K562 (cell line): ENCODE measurements at regions of chr12 and their contacts with region 1.

Region 1: GRCh38 chr12:51891843-51892242 is 3.9 kb downstream of the ANKRD33 start:
- DNase-seq: peak in 2 of 4 experiments; percentile 51 to 63
- ATAC-seq: no peak
- H3K4me3 ChIP-seq: no peak overlapping the region
- H3K27ac ChIP-seq: no peak overlapping the region
- H3K4me1 ChIP-seq: peaks cover 2 to 33% of the 10 kb centered on the region in 2 experiments; a peak in 3 of 5 replicates
- H3K27me3 ChIP-seq: no peaks in the 10 kb centered on the region
- CTCF ChIP-seq: peak in 2 of 3 experiments; percentile 16 to 56; a peak in 3 of 6 replicates
- EP300 ChIP-seq: no peak
- POLR2A ChIP-seq: no peak
- RAD21 ChIP-seq: peak; percentile 29 to 60; a peak in 2 of 4 replicates

Region 2: DNA sequence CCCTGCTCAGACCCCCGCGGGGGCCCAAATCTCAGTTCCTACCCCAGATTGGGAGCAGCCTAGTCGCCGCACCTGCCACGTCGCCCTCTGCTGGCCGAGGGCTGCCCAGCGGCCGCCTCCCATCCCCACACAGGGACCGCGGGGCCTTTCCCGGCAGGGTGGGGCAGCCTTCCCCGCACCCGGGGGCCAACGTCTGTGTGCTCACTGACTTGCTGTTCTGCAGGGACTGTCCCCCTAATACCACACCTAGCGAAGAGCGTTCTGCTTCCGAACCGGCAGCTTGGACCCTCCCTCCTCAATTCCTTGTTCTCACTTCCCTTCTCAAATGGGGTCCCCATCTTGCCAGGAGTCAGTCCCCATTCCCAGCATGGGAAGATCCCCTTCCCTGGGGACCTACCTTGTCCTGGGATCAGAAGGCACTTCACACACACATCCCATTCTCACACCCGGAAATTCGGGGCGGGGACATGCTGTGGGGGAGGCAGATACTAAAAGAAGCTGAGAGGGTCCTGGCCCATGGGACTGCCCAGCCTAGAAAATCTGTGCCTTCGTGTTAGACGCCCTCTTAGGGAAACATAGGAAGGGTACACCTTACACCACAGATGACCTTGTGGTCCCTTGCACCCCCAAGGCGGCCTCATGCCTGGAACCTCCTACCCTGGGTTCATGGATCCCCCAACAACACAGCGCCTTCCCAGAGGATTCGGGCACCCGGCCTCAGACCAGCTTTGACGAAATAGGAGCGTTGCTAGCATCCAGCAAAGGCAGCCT is 31.8 kb after region 1 on chr12:
- CTCF ChIA-PET with region 1: interaction called, 11 read pairs
- POLR2A ChIA-PET with region 1: interaction called, 4 read pairs
- in situ Hi-C with region 1: no loop called
- intact Hi-C with region 1: loop called (anchors 1 kb)
- DNase-seq: peak; percentile 70 to 83 (median 76)
- ATAC-seq: peak; percentile 85
- H3K4me3 ChIP-seq: no peak overlapping the region
- H3K27ac ChIP-seq: no peak overlapping the region
- H3K4me1 ChIP-seq: peaks cover 34% of the 10 kb centered on the region in 2 experiments
- H3K27me3 ChIP-seq: no peaks in the 10 kb centered on the region
- CTCF ChIP-seq: peak; percentile 76 to 87 (median 86)
- EP300 ChIP-seq: no peak
- POLR2A ChIP-seq: no peak
- RAD21 ChIP-seq: peak; percentile 56 to 82

Region 3: DNA sequence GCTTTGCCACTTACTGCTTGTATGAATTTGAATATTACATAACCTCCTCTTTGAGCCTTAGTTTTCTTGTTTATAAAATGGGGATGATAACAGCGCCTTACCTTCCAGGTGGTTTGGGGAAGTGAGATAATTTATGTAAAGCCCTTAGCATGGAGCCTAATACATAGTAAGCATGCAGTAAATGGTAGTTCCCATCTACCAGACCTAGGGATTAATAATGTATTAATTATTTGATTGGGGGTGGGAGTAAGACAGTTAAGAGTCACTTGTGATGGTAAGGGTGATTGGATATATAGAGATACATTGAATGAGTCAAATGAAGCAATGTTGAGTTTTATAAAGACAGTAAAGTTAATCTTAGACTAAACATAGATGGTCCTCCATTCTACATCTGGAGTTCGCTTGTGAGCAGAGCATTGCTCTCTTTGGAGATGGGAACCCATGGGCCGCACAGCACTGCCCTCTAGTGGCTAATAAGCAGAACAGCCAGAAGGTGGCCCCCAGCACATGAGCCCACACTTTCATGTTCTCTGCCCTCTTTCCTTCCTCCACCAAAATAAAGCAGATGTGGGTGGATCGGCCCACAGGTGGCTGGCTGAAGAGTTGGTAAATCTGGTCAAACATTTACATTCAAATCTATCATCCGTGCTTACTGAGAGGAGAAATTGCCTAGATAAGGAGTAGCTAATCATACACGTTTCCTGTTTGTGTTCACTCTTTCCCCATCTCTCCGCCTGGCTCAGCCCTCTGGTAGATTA is 88.4 kb after region 1 on chr12:
- CTCF ChIA-PET with region 1: interaction called, 25 read pairs
- POLR2A ChIA-PET with region 1: interaction called, 3 read pairs
- in situ Hi-C with region 1: loop called (anchors 5 kb)
- intact Hi-C with region 1: loop called (anchors 1 kb)
- DNase-seq: peak; percentile 85 to 88 (median 86)
- ATAC-seq: peak; percentile 98
- H3K4me3 ChIP-seq: no peak overlapping the region
- H3K27ac ChIP-seq: no peak overlapping the region; the same call in 2 of the 3 replicates
- H3K4me1 ChIP-seq: peaks cover 0 to 15% of the 10 kb centered on the region in 2 experiments; a peak in 4 of 5 replicates
- H3K27me3 ChIP-seq: no peaks in the 10 kb centered on the region
- CTCF ChIP-seq: peak; percentile 94 to 97 (median 96)
- EP300 ChIP-seq: no peak
- POLR2A ChIP-seq: no peak
- RAD21 ChIP-seq: peak; percentile 91 to 97